RWPE1 (cell line): ENCODE measurements at regions of chr7 and their contacts with region 1.

Region 1: DNA sequence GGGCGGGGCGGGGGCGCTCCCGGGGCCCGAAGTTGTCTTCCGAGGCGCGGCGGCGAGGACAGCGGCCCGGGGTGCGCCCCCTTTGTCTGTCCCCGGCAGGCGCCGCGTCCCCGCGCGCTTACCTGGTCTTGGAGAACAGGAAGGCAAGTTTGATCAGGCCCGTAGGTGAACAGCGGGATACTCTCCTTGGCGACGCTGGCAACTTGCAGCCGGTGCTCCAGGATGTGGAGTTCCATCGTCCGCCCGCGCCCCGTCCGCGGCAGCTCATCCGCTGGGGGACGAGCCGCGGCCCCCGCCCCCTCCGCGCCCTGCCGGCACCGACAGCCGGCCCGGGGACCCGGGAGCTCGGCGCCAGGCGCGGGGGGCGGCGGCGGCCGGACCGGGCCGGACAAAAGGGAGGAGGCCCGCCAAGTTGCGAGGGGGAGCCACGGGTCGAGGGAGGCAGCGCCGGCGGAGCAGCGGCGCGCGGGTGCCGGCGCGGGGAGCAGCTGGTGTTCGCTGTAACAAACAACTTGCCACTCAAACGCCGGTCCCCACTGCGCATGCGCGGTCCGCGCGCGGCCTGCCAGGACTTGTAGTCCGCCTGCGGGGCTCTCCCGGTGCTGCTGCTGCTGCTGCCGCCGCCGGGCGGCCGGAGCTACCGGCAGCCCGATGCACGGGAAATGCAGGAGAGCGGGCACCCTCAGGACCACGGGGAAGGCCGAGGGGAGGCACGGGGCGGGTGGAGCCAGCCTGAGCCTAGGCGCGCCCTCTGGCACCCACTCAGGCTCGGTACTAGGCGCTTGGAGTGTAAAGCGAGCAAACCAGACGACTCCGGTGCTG is 35.6 kb upstream of the SPDYE3 start:
- DNase-seq: peak; percentile 80
- H3K27ac ChIP-seq: peak overlapping the region; percentile 74
- CTCF ChIP-seq: peak; percentile 57

Region 2: DNA sequence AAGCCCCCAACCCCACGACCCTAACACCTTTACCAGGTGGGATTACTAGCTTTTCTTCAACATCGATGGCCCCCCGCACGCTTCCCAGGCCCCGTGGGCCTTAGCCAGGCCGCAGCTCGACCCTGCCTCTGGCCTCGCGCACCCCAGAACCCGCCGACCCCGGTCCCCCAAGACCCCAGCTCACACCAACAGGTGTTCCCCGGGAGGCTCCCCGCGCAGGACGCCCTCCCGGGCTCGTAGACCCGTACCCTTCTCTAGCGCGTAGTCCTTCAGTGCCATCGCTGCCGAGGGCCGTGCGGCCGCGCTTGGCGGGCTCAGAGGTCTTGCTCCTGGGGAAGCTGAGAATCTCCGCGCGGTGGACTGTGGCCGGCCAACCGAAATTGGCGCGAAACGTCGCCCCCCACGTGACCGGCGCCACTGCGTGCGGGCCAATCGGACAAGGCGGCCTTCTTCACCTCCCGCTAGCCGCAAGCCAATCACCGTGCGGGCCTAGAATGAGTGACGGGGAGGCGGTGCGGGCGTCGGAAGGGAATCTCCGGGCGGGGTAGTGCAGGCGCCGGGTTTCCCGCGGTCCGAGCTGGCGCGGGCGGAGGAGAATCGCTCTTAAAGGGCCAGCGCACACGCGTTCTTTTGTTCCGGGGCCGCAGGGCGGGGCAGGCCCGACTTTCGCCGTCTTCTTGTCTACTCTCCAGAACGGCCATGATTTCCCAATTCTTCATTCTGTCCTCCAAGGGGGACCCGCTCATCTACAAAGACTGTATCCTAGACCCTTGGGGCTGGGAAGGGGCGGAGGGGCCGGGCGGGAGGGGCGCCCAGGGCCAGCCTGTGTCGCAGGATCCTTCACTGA is 170.7 kb before region 1 on chr7 and contains the starts of genes AP4M1 and MCM7:
- CTCF ChIA-PET with region 1: interaction called, 12 read pairs
- POLR2A ChIA-PET with region 1: no interaction called
- DNase-seq: peak; percentile 99
- H3K27ac ChIP-seq: peak within 1 kb of the TSS; percentile 98
- CTCF ChIP-seq: no peak